CD4-positive, alpha-beta T cell (primary cell): ENCODE measurements at regions of chr6 and their contacts with region 1.

Region 1: GRCh38 chr6:32700391-32701040 is 34.1 kb upstream of the HLA-DQB1 start:
- DNase-seq: peak in 10 of 14 experiments; percentile 0 to 73 (median 10)
- ATAC-seq: peak; percentile 41
- H3K4me3 ChIP-seq: no peak overlapping the region
- H3K4me3 Mint-ChIP-seq: no peak overlapping the region
- H3K27ac ChIP-seq: no peak overlapping the region
- H3K27ac Mint-ChIP-seq: no peak overlapping the region
- H3K4me1 ChIP-seq: peaks cover 3% of the 10 kb centered on the region
- H3K4me1 Mint-ChIP-seq: no peaks in the 10 kb centered on the region
- H3K27me3 ChIP-seq: peaks cover 4 to 12% of the 10 kb centered on the region in 2 experiments
- H3K27me3 Mint-ChIP-seq: peaks cover 50% of the 10 kb centered on the region
- CTCF ChIP-seq: peak; percentile 93

Region 2: GRCh38 chr6:32432050-32432450 is 268.5 kb before region 1 on chr6:
- CTCF ChIA-PET with region 1: interaction called, 12 read pairs
- POLR2A ChIA-PET with region 1: no interaction called
- intact Hi-C with region 1: loop called (anchors 1 kb)
- DNase-seq: peak in 3 of 14 experiments; percentile 56 to 66 (median 63)
- ATAC-seq: no peak
- H3K4me3 ChIP-seq: no peak overlapping the region
- H3K4me3 Mint-ChIP-seq: no peak overlapping the region
- H3K27ac ChIP-seq: no peak overlapping the region
- H3K27ac Mint-ChIP-seq: no peak overlapping the region
- H3K4me1 ChIP-seq: no peaks in the 10 kb centered on the region
- H3K4me1 Mint-ChIP-seq: no peaks in the 10 kb centered on the region
- H3K27me3 ChIP-seq: no peaks in the 10 kb centered on the region
- H3K27me3 Mint-ChIP-seq: peaks cover 5% of the 10 kb centered on the region
- CTCF ChIP-seq: peak; percentile 64

Region 3: DNA sequence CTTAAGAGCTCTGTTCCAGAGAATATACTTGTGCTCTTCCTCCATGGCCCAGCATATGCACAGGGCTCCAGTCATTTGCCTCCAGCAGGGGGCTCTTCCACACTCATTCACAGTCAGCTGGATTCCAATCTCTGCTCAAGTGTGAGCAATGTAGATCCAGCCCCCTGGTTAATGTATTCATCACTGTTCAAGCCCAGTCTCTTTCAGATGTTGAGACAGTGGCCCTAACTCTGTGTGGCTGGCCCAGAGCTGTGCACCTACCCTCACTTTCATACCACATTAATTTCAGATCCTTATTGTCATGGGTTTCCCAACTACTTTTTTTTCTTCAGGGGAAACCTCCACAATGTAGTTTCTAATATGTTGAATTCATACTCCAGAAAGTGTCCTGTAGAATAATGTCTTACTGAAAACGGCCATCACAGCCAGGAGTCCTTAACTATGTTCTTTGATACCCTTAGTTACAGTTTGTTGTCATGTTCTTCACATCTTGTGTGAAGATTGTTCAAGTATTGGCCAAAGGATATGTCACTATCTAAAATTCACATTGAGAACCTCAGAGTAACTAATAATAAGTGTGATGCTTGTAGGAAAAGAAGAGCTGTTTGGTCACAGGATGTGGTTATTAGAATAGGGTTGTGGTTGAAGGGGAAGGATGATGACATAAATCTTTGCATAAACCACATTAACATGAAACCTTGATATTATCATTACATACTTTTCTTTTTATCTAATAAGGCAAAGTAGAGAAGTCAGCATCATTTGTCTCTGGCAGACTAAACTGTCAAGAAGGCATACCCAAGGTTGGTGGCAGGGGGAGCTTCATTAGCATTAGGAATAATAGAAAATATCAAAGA is 77.7 kb before region 1 on chr6:
- CTCF ChIA-PET with region 1: interaction called, 3 read pairs
- POLR2A ChIA-PET with region 1: interaction called, 6 read pairs
- intact Hi-C with region 1: loop called in 1 of 2 experiments (anchors 2 kb)
- DNase-seq: peak in 11 of 14 experiments; percentile 8 to 94 (median 24)
- ATAC-seq: peak; percentile 77
- H3K4me3 ChIP-seq: no peak overlapping the region
- H3K4me3 Mint-ChIP-seq: peak overlapping the region; percentile 13
- H3K27ac ChIP-seq: peak overlapping the region; percentile 49 to 73
- H3K27ac Mint-ChIP-seq: peak overlapping the region; percentile 91
- H3K4me1 ChIP-seq: peaks cover 23% of the 10 kb centered on the region
- H3K4me1 Mint-ChIP-seq: peaks cover 57% of the 10 kb centered on the region
- H3K27me3 ChIP-seq: no peaks in the 10 kb centered on the region
- H3K27me3 Mint-ChIP-seq: no peaks in the 10 kb centered on the region
- CTCF ChIP-seq: peak; percentile 45

Region 4: DNA sequence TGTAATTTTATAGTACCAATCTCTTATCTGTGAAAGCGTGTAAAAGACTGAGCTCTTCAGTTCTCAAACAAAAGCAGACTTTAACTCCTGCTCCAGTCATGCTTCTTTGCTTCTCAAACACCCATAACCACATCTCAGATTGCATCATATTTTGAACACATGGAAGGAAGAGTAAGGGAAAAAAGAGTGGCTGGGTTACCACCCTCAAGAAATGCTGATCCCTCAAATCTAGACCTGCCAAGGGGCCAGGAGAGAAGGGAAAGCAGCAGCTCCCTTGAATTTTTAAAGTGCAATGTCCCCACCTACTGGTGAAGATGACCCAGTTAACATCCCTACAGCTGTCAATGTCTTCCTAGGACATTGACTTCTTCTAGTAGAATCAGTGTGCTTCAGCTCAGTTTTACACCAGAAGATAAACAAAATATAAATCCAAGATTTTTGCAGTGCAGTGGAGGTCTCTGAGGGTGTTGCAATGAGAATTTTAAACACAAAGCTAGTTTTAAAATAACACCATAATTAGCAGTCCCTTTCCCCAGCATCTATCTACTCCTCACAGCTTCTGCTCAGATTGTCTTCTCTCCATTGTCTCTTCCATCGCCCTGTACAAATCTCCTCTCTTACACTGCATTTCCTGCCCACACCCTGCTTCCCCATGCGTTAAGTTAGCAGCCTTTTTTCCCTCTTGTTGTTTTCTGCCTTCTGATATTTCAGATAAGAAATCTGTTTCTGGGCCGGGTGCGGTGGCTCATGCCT is 85.4 kb after region 1 on chr6:
- CTCF ChIA-PET with region 1: interaction called, 6 read pairs
- POLR2A ChIA-PET with region 1: no interaction called
- intact Hi-C with region 1: loop called (anchors 2 to 5 kb)
- DNase-seq: peak in 5 of 14 experiments; percentile 11 to 69 (median 57)
- ATAC-seq: peak; percentile 57
- H3K4me3 ChIP-seq: no peak overlapping the region
- H3K4me3 Mint-ChIP-seq: no peak overlapping the region
- H3K27ac ChIP-seq: no peak overlapping the region
- H3K27ac Mint-ChIP-seq: no peak overlapping the region
- H3K4me1 ChIP-seq: no peaks in the 10 kb centered on the region
- H3K4me1 Mint-ChIP-seq: no peaks in the 10 kb centered on the region
- H3K27me3 ChIP-seq: peaks cover 0 to 16% of the 10 kb centered on the region in 2 experiments
- H3K27me3 Mint-ChIP-seq: peaks cover 62% of the 10 kb centered on the region
- CTCF ChIP-seq: peak; percentile 65

Region 5: GRCh38 chr6:32796848-32797776 is 96.6 kb after region 1 on chr6:
- CTCF ChIA-PET with region 1: interaction called, 6 read pairs
- POLR2A ChIA-PET with region 1: no interaction called
- intact Hi-C with region 1: loop called (anchors 2 to 5 kb)
- DNase-seq: peak; percentile 57 to 88 (median 76)
- ATAC-seq: peak; percentile 73
- H3K4me3 ChIP-seq: peak overlapping the region; percentile 14
- H3K4me3 Mint-ChIP-seq: peak overlapping the region; percentile 40
- H3K27ac ChIP-seq: no peak overlapping the region
- H3K27ac Mint-ChIP-seq: no peak overlapping the region
- H3K4me1 ChIP-seq: peaks cover 9% of the 10 kb centered on the region
- H3K4me1 Mint-ChIP-seq: peaks cover 26% of the 10 kb centered on the region
- H3K27me3 ChIP-seq: peaks cover 14 to 21% of the 10 kb centered on the region in 2 experiments
- H3K27me3 Mint-ChIP-seq: peaks cover 65% of the 10 kb centered on the region
- CTCF ChIP-seq: peak; percentile 97